HCT116 (cell line): ENCODE measurements at regions of chr14 and their contacts with region 1.

Region 1: DNA sequence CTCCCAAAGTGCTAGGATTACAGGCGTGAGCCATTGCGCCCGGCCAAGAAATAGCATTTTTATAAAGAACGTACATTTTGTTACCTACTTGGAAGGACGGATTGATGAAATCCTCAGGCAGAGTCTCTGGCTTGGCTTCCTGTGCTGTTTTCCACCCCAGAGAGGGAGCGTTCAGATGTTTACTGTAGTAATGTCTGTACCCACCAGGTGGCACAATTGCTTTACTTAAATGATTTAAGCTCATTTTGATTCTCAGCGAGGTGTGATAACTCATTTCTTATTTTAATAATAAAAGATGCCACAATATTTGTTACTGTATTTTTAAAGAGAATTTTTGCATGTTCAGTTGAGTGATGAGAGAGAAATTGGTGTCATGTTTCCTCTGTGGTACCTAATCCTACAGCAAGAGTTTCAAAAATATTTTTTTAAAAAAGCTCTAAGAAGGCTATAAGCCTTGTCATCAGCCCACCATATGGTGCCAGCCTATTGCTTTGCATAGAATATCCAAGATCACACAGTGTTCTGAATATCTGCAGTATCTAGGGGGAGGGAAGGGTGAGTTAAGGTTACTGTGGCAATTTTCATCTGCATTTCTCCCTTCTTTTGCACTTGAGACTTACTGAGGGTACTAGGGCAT is 82.6 kb upstream of the TRAF3 start:
- DNase-seq: peak; percentile 48
- ATAC-seq: peak; percentile 85
- H3K4me3 ChIP-seq: no peak overlapping the region
- H3K27ac ChIP-seq: no peak overlapping the region
- H3K4me1 ChIP-seq: no peaks in the 10 kb centered on the region; a peak in 3 of 4 replicates
- H3K27me3 ChIP-seq: no peaks in the 10 kb centered on the region
- CTCF ChIP-seq: peak; percentile 59; a peak in 5 of 6 replicates
- POLR2A ChIP-seq: no peak
- RAD21 ChIP-seq: peak; percentile 75

Region 2: GRCh38 chr14:102708494-102708893 is 13.8 kb after region 1 on chr14:
- CTCF ChIA-PET with region 1: interaction called, 13 read pairs
- POLR2A ChIA-PET with region 1: no interaction called
- RAD21 ChIA-PET with region 1: no interaction called
- intact Hi-C with region 1: no loop called
- DNase-seq: no peak
- ATAC-seq: no peak
- H3K4me3 ChIP-seq: no peak overlapping the region
- H3K27ac ChIP-seq: no peak overlapping the region
- H3K4me1 ChIP-seq: peaks cover 4 to 16% of the 10 kb centered on the region in 2 experiments; a peak in 2 of 4 replicates
- H3K27me3 ChIP-seq: no peaks in the 10 kb centered on the region
- CTCF ChIP-seq: no peak
- POLR2A ChIP-seq: no peak
- RAD21 ChIP-seq: no peak

Region 3: GRCh38 chr14:102878174-102878969 is 183.7 kb after region 1 on chr14:
- CTCF ChIA-PET with region 1: no interaction called
- POLR2A ChIA-PET with region 1: no interaction called
- RAD21 ChIA-PET with region 1: no interaction called
- intact Hi-C with region 1: no loop called
- DNase-seq: no peak
- ATAC-seq: peak; percentile 82
- H3K4me3 ChIP-seq: no peak overlapping the region
- H3K27ac ChIP-seq: no peak overlapping the region
- H3K4me1 ChIP-seq: no peaks in the 10 kb centered on the region
- H3K27me3 ChIP-seq: no peaks in the 10 kb centered on the region
- CTCF ChIP-seq: peak in 2 of 3 experiments; percentile 18 to 31; a peak in 3 of 6 replicates
- POLR2A ChIP-seq: no peak
- RAD21 ChIP-seq: 0 out of 2 replicates have a peak, but pooled peaks have one; percentile 7

Region 4: GRCh38 chr14:102917469-102918211 is 223.0 kb after region 1 on chr14:
- CTCF ChIA-PET with region 1: interaction called, 15 read pairs
- POLR2A ChIA-PET with region 1: no interaction called
- RAD21 ChIA-PET with region 1: interaction called in 1 of 2 experiments, 4 read pairs
- intact Hi-C with region 1: loop called (anchors 2 kb)
- DNase-seq: peak; percentile 18
- ATAC-seq: peak; percentile 71
- H3K4me3 ChIP-seq: no peak overlapping the region
- H3K27ac ChIP-seq: no peak overlapping the region
- H3K4me1 ChIP-seq: no peaks in the 10 kb centered on the region
- H3K27me3 ChIP-seq: no peaks in the 10 kb centered on the region
- CTCF ChIP-seq: peak; percentile 75 to 79 (median 78)
- POLR2A ChIP-seq: no peak
- RAD21 ChIP-seq: peak; percentile 90

Region 5: GRCh38 chr14:102957222-102957621 is 262.6 kb after region 1 on chr14:
- CTCF ChIA-PET with region 1: no interaction called
- POLR2A ChIA-PET with region 1: no interaction called
- RAD21 ChIA-PET with region 1: no interaction called
- intact Hi-C with region 1: no loop called
- DNase-seq: no peak
- ATAC-seq: no peak
- H3K4me3 ChIP-seq: no peak overlapping the region
- H3K27ac ChIP-seq: no peak overlapping the region
- H3K4me1 ChIP-seq: no peaks in the 10 kb centered on the region
- H3K27me3 ChIP-seq: no peaks in the 10 kb centered on the region
- CTCF ChIP-seq: no peak
- POLR2A ChIP-seq: no peak
- RAD21 ChIP-seq: no peak